Mammary epithelial cell (primary cell): ENCODE measurements at regions of chr10 and their contacts with region 1.

Region 1: DNA sequence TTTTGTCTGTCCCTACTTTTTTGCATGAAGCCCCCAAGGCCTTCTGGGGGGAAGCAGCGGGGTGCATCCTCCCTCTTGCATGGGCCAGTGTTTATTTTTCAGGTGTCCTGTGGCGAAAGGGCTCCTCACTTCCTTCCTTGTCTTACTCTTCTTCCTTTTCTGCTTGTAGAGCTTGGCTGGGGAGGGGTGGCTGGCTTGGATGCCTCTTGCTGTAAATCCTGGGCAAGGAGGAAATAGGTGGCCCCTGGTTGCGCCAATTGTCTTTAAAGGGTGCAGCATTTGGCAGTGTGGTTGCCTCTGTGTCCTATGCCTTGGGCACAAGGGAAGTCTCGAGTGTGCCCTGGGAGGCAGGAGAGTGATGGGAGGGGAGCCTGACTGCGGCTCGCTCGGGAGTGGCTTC is 95.0 kb downstream of the SH2D4B start:
- DNase-seq: no peak
- H3K4me3 ChIP-seq: no peak overlapping the region
- H3K27ac ChIP-seq: no peak overlapping the region
- H3K4me1 ChIP-seq: no peaks in the 10 kb centered on the region
- H3K27me3 ChIP-seq: no peaks in the 10 kb centered on the region
- CTCF ChIP-seq: no peak

Region 2: GRCh38 chr10:80453701-80454513 is 178.8 kb before region 1 on chr10 and contains the start of gene TSPAN14:
- CTCF ChIA-PET with region 1: no interaction called
- dilution Hi-C with region 1: no loop called
- in situ Hi-C with region 1: no loop called
- intact Hi-C with region 1: no loop called
- DNase-seq: peak; percentile 78
- H3K4me3 ChIP-seq: peak within 1 kb of the TSS; percentile 78 to 90 (median 86)
- H3K27ac ChIP-seq: peak within 1 kb of the TSS; percentile 71
- H3K4me1 ChIP-seq: peaks cover 43% of the 10 kb centered on the region
- H3K27me3 ChIP-seq: no peaks in the 10 kb centered on the region
- CTCF ChIP-seq: no peak
- total RNA-seq, gene TSPAN14: 47.8 to 102 TPM

Region 3: GRCh38 chr10:80718024-80718423 is 85.3 kb after region 1 on chr10:
- CTCF ChIA-PET with region 1: no interaction called
- dilution Hi-C with region 1: loop called (anchors 5 kb)
- in situ Hi-C with region 1: no loop called
- intact Hi-C with region 1: no loop called
- DNase-seq: no peak
- H3K4me3 ChIP-seq: no peak overlapping the region
- H3K27ac ChIP-seq: no peak overlapping the region
- H3K4me1 ChIP-seq: no peaks in the 10 kb centered on the region
- H3K27me3 ChIP-seq: no peaks in the 10 kb centered on the region
- CTCF ChIP-seq: no peak